Esophagus muscularis mucosa (tissue), 4 donors: ENCODE measurements at regions of chr15 and their contacts with region 1.

Region 1: DNA sequence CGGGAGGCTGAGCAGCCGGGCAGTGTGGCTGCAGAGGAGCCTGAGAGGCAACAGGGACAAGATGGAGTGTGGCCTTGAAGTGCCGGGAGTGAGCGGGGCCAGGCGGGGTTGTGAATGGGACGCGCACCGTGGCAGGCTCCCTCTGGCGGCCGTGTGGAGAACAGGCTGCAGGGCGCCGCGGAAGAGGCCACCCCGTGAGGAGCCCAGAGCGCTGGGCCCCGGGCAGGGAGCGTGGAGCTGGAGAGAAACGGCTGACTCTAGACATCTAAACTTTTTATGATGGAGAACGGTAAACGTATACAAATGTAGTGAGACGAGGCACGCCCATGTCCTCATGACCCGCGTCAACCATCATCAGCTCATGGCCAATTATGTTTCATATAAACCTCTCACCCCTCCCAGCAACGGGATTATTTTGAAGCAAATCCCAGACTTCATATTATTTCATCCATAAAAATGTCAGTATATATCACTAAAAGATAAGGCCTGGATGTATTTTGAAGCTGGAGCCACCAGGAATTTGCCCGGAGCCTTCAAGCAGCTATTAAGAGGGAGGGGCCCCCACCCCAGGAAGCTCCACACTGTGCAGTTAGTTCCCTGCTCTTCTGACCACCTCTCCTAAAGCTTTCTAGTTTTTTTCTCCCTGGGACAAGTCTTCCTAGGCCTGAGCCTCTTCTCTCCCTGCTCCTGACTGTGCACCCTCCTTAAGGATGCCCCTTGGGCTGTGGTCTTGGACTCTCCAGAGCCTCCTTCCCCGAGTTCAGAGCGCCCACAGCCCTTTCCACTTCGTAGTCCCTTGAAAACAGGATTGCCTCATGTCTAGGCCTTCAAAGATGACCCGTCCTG is 149.4 kb downstream of the SMAD6 start:
- DNase-seq: peak; percentile 97
- H3K4me3 ChIP-seq: peak overlapping the region in 1 of 4 donors; percentile 19
- H3K27ac ChIP-seq: peak overlapping the region; percentile 29 to 63 (median 52)
- H3K4me1 ChIP-seq: peaks cover 23 to 30% (median 27%) of the 10 kb centered on the region in 4 donors
- H3K27me3 ChIP-seq: no peaks in the 10 kb centered on the region
- CTCF ChIP-seq: peak in 2 of 3 experiments; percentile 94 to 95
- EP300 ChIP-seq: no peak
- POLR2A ChIP-seq: no peak

Region 2: GRCh38 chr15:66603301-66604179 is 247.9 kb before region 1 on chr15:
- intact Hi-C with region 1: loop called (anchors 2 kb)
- DNase-seq: no peak
- H3K4me3 ChIP-seq: no peak overlapping the region
- H3K27ac ChIP-seq: no peak overlapping the region
- H3K4me1 ChIP-seq: no peaks in the 10 kb centered on the region
- H3K27me3 ChIP-seq: no peaks in the 10 kb centered on the region
- CTCF ChIP-seq: peak; percentile 72 to 80 (median 73)
- EP300 ChIP-seq: no peak
- POLR2A ChIP-seq: no peak

Region 3: GRCh38 chr15:66619151-66619903 is 232.1 kb before region 1 on chr15:
- intact Hi-C with region 1: loop called (anchors 5 kb)
- DNase-seq: no peak
- H3K4me3 ChIP-seq: no peak overlapping the region
- H3K27ac ChIP-seq: peak overlapping the region in 2 of 4 donors; percentile 30 to 67
- H3K4me1 ChIP-seq: peaks cover 53 to 56% (median 55%) of the 10 kb centered on the region in 4 donors
- H3K27me3 ChIP-seq: peaks cover 0 to 17% (median 2%) of the 10 kb centered on the region in 4 donors
- CTCF ChIP-seq: peak; percentile 90 to 98 (median 90)
- EP300 ChIP-seq: no peak
- POLR2A ChIP-seq: no peak

Region 4: GRCh38 chr15:66700802-66701421 is 150.5 kb before region 1 on chr15:
- intact Hi-C with region 1: loop called (anchors 2 kb)
- DNase-seq: peak; percentile 98
- H3K4me3 ChIP-seq: peak overlapping the region; percentile 66 to 86 (median 74)
- H3K27ac ChIP-seq: peak overlapping the region; percentile 84 to 92 (median 88)
- H3K4me1 ChIP-seq: peaks cover 20 to 56% (median 42%) of the 10 kb centered on the region in 4 donors
- H3K27me3 ChIP-seq: no peaks in the 10 kb centered on the region
- CTCF ChIP-seq: peak in 1 of 3 experiments; percentile 6
- EP300 ChIP-seq: no peak
- POLR2A ChIP-seq: no peak